Common myeloid progenitor, CD34-positive (primary cell): ENCODE measurements at regions of chr5 and their contacts with region 1.

Region 1: DNA sequence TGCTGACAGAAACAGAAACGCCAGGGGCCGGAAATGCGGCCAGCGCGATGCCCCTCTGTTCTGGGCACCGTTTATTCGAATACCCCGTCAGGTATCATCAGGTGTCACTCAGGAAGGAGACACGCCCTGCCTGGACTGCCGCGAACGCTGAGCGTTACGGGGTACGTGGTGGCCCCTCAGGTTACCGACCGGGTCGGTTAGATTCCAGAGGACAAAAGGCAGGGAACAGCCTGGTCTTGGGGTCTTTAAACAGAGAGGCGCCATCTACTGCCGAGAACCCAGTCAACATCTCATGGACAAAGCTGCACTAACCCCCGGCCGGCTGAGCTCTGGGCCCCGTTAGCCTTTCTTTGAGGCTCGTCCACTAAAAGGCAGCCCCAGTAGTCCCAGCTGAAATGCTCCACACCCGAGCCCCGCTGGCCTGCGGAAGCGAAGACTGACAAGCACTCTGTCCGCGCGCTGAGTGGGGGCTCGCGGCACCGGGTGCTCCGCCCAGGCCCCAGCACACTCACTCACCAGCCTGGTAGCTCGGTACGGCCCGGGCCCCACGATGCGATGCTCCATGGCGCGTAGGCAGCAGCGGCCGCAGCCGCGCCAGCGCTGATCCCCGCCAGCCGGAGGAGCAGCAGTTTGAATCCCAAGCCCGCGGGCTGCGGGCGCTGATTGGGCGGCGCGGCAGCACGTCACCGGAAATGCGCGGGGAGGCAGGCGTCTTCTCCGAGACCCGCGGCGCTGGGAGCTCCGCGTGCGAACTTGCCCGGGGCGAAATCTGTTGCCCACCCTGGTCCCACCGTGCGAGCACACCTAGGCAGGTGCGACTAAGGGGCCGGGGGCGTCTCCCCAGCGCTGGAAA is at the start of gene DEPDC1B:
- DNase-seq: peak; percentile 92 to 96 (median 96)
- H3K4me3 ChIP-seq: peak within 1 kb of the TSS; percentile 80 to 99 (median 92)
- H3K27ac ChIP-seq: peak within 1 kb of the TSS; percentile 73 to 87
- H3K4me1 ChIP-seq: peaks cover 8 to 27% (median 16%) of the 10 kb centered on the region in 4 experiments
- H3K27me3 ChIP-seq: no peaks in the 10 kb centered on the region

Region 2: GRCh38 chr5:60540856-60541805 is 158.6 kb before region 1 on chr5:
- CTCF ChIA-PET with region 1: no interaction called
- POLR2A ChIA-PET with region 1: no interaction called
- DNase-seq: peak in 1 of 3 donors; percentile 16
- H3K4me3 ChIP-seq: no peak overlapping the region
- H3K27ac ChIP-seq: no peak overlapping the region
- H3K4me1 ChIP-seq: no peaks in the 10 kb centered on the region
- H3K27me3 ChIP-seq: no peaks in the 10 kb centered on the region

Region 3: GRCh38 chr5:60677844-60678664 is 21.7 kb before region 1 on chr5:
- CTCF ChIA-PET with region 1: interaction called, 80 read pairs
- POLR2A ChIA-PET with region 1: no interaction called
- DNase-seq: peak; percentile 72 to 74 (median 73)
- H3K4me3 ChIP-seq: peak overlapping the region in 2 of 7 experiments; percentile 22 to 46
- H3K27ac ChIP-seq: no peak overlapping the region
- H3K4me1 ChIP-seq: peaks cover 0 to 8% (median 2%) of the 10 kb centered on the region in 4 experiments
- H3K27me3 ChIP-seq: no peaks in the 10 kb centered on the region

Region 4: GRCh38 chr5:60687927-60688720 is 11.6 kb before region 1 on chr5:
- CTCF ChIA-PET with region 1: interaction called, 80 read pairs
- POLR2A ChIA-PET with region 1: no interaction called
- DNase-seq: peak; percentile 31 to 66 (median 41)
- H3K4me3 ChIP-seq: no peak overlapping the region
- H3K27ac ChIP-seq: no peak overlapping the region
- H3K4me1 ChIP-seq: no peaks in the 10 kb centered on the region
- H3K27me3 ChIP-seq: no peaks in the 10 kb centered on the region